OCI-LY7 (cell line): ENCODE measurements at regions of chr20 and their contacts with region 1.

Region 1: DNA sequence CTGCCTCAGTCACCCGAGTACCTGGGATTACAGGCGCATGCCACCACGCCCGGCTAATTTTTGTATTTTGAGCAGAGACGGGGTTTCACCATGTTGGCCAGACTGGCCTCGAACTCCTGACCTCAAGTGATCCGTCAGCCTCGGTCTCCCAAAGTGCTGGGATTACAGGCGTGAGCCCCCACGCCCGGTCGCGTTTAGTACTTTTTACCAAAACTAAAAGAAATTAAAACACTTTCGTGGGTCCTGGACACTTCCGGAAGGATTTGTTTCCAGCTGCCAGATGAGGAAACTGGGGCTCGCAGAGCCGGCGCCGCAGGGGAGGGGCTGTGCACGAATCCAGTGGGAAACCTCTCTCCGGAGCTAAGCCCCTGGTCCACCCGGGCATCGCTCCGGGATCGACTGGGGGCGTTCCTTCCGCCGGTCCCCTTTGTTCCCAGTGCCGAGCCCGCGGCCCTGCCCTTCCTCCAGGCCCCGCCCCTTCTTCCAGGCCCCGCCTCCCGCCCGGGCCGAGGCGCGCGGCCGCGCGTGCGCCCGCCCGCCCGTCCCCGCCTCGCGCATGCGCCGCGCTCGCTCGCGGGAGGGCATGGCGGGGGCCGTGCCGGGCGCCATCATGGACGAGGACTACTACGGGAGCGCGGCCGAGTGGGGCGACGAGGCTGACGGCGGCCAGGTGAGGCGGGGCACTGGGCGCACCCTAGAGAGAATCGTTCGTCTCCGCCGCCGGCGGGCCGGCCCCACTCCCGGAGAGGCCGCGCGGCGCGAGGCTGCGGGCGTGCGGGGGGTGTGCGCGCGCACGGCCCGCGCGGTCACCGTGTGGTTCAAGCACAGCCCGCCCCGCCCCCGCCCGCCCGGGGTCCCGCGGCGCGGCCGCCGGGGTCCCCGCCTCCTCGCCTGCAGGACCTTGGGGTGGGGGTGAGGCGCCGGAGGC is at the start of gene NELFCD:
- DNase-seq: peak; percentile 91
- H3K4me3 ChIP-seq: peak within 1 kb of the TSS; percentile 96
- H3K27ac ChIP-seq: peak within 1 kb of the TSS; percentile 54
- H3K4me1 ChIP-seq: peaks cover 54% of the 10 kb centered on the region
- CTCF ChIP-seq: no peak
- total RNA-seq, gene NELFCD: 83.4 and 90.7 TPM in 2 replicates

Region 2: DNA sequence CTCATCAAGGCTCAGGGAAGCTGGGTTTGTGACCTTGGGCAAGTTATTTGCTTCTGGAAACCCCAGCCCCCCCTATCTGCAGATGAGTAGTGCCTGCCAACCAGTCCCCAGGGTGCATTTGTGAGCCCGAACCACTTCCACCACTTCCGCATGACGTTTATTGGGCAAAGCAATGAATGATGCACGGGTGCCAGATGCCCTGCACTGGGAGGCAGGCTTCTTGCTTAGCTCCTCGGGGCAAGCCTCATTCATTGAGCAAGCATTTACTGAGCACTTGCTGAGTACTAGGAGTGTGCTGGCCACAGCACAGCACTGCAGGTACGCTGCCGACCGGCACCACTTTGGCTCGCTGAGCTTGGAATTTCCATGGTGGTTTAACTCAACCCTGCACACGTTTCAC is 190.5 kb before region 1 on chr20:
- CTCF ChIA-PET with region 1: no interaction called
- POLR2A ChIA-PET with region 1: no interaction called
- intact Hi-C with region 1: no loop called
- DNase-seq: no peak
- H3K4me3 ChIP-seq: no peak overlapping the region
- H3K27ac ChIP-seq: no peak overlapping the region
- H3K4me1 ChIP-seq: no peaks in the 10 kb centered on the region
- CTCF ChIP-seq: no peak

Region 3: DNA sequence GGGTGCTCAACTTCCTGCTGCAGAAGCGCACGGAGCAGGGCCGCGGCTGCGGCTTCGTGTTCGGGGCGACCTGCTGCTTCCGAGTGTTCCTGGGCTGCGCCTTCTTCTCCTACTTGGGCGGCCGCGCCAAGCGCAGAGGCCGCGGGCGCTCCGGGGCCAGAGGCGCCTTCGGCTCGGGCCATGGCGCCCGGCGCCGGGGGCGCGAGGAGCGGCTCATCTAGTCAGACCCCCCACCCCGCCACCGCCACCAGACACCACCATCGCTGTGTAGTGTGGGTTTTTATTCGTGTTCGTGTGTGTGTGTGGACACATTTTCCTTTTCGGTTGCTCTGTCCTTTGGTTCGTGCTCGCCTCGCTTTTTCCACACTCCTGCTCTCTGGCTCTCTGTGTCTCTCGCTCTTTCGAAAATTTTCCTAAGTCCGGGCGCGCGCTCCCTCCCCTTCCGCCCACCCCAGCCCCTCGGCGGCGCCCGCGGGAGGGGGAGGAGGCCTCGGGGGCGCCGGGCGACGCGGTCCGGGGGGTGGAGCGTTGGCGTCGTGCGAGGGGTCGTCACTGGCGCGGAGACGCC is 90.4 kb before region 1 on chr20:
- CTCF ChIA-PET with region 1: no interaction called
- POLR2A ChIA-PET with region 1: interaction called, 5 read pairs
- intact Hi-C with region 1: loop called (anchors 5 kb)
- DNase-seq: peak; percentile 85
- H3K4me3 ChIP-seq: peak overlapping the region; percentile 90
- H3K27ac ChIP-seq: peak overlapping the region; percentile 84
- H3K4me1 ChIP-seq: peaks cover 58% of the 10 kb centered on the region
- CTCF ChIP-seq: no peak

Region 4: GRCh38 chr20:58907399-58908137 is 73.4 kb before region 1 on chr20:
- CTCF ChIA-PET with region 1: interaction called, 5 read pairs
- POLR2A ChIA-PET with region 1: interaction called, 17 read pairs
- intact Hi-C with region 1: loop called (anchors 1 kb)
- DNase-seq: peak; percentile 98
- H3K4me3 ChIP-seq: peak overlapping the region; percentile 60
- H3K27ac ChIP-seq: peak overlapping the region; percentile 98
- H3K4me1 ChIP-seq: peaks cover 40% of the 10 kb centered on the region
- CTCF ChIP-seq: no peak

Region 5: GRCh38 chr20:59006864-59007664 is 26.1 kb after region 1 on chr20 and contains the start of gene CTSZ:
- CTCF ChIA-PET with region 1: no interaction called
- POLR2A ChIA-PET with region 1: interaction called, 3 read pairs
- intact Hi-C with region 1: loop called (anchors 1 kb)
- DNase-seq: peak; percentile 53
- H3K4me3 ChIP-seq: peak within 1 kb of the TSS; percentile 74
- H3K27ac ChIP-seq: peak within 1 kb of the TSS; percentile 85
- H3K4me1 ChIP-seq: peaks cover 70% of the 10 kb centered on the region
- CTCF ChIP-seq: no peak
- total RNA-seq, gene CTSZ: 47.2 and 50.5 TPM in 2 replicates

Region 6: DNA sequence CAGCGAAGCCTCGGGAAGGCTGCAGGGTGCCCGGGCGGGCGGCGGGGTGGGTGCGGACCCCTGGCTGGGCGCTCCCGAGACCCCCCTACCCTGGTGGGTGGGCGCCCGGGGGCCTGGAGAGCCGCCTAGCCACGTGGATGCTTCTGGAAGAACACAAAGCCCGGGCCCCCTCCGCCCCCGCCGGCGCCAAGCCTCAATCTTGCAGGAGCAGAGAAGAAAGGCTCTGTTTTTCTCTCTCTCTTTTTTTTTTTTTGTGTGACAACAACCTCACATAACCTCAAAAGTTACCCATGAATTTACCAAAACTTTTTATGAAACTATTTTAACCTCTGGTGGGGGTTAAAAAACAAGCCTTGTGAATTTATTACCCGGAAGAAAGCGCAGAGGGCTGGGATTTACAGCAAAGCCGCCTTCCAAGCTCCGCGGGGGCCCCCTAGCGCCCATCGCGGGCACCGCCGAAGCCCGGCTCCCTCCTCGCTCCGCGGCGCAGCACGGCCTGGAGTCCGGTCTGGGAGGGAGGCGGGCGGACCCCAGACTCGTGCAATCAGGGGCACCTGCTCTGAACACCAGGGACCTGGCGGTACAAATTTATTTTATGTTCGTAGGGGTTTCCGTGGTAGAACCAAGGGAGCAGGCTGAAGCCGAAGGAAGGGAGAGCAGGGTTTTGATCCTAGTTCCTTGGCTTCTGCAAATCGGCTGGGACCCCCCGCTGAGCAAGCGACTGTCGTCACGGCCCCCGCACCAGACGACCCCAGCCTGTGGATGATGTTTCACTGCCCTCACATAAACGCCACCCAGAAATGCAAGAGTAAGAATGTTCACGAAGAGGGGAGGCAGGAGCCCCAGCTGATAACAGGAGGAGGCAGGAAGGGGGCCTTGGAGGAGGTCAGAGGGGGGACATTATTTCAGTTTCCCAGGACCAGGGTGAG is 241.6 kb after region 1 on chr20:
- CTCF ChIA-PET with region 1: no interaction called
- POLR2A ChIA-PET with region 1: no interaction called
- intact Hi-C with region 1: no loop called
- DNase-seq: peak; percentile 63
- H3K4me3 ChIP-seq: no peak overlapping the region
- H3K27ac ChIP-seq: no peak overlapping the region
- H3K4me1 ChIP-seq: no peaks in the 10 kb centered on the region
- CTCF ChIP-seq: peak; percentile 98